Posterior vena cava (tissue), 2 donors: ENCODE measurements at regions of chrX and their contacts with region 1.

Region 1: DNA sequence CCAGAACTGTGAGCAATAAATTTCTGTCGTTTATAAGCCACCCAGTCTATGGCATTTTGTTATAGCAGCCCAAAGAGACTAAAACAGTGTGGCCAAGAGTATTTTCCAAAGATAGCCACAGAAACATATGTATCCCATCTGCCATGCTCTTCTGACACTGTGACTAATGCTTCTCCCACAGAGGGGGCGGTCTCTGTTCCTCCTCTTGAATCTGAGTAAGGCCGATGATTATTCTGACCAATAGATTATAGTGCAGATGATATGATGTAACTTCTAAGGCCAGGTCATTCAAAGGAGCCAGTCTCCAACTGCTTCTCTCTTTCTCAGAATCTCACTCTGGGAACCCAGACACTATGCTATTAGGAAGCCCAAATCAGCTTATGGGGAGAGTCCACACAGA is 570.7 kb downstream of the BCOR start:
- DNase-seq: no peak

Region 2: DNA sequence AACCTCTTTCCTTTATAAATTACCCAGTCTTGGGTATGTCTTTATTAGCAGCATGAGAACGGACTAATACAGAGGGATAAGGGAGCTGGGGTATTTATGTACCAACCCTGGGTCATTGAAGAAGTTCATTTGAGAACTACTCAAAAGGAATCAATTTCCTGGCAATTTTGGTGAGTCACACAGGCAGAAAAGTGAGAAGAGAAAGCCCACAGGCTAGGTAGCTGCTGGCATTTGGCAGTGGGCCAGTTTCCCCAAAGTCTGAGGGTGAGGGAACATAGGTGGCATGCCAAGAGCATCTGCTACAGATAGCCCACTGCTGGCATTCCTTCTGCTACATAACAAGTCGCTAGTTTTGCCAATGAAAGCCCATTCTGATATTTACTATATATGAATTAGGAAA is 314.6 kb before region 1 on chrX:
- intact Hi-C with region 1: no loop called
- DNase-seq: no peak

Region 3: DNA sequence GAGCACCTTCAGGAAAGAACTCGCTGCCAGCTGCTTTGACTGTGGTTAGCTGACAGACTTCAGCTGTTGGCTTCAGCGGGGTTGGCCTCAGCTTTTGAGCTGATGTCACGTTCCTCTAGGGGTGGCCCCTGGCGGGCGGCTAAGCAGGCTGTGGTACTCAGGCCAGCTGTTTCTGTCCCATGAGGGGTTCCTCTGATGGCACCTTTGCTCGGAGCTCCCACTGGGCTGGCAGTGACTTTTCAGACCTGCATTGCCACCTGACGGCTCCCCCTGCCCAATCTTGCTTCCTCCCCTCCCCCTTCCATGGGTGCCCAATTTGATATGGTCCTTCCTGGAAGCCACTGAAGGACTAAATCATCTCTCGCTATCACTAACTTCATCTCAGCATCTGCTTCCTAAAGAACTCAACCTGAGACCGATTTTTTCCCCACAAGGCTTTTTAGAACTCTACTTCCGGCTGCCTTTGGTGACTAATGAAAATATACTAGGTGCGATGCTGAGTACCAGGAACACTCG is 51.4 kb after region 1 on chrX:
- intact Hi-C with region 1: loop called in 1 of 2 experiments (anchors 1 kb)
- DNase-seq: no peak